ENCODE measurements at regions of chr2 and their contacts with region 1.

Region 1: GRCh38 chr2:96265840-96266679 is at the starts of genes CIAO1 and TMEM127:
- DNase-seq: peak; percentile 99
- H3K4me3 Mint-ChIP-seq: peak within 1 kb of the TSS; percentile 96
- H3K27ac Mint-ChIP-seq: peak within 1 kb of the TSS; percentile 94
- H3K4me1 Mint-ChIP-seq: peaks cover 33% of the 10 kb centered on the region
- H3K27me3 Mint-ChIP-seq: no peaks in the 10 kb centered on the region
- total RNA-seq, gene CIAO1: 111 and 115 TPM in 2 replicates
- total RNA-seq, gene TMEM127: 29.7 and 30.1 TPM in 2 replicates

Region 2: GRCh38 chr2:96116879-96117697 is 149.0 kb before region 1 on chr2:
- intact Hi-C with region 1: loop called (anchors 5 kb)
- DNase-seq: peak; percentile 61
- H3K4me3 Mint-ChIP-seq: peak overlapping the region; percentile 75
- H3K27ac Mint-ChIP-seq: no peak overlapping the region
- H3K4me1 Mint-ChIP-seq: peaks cover 28% of the 10 kb centered on the region
- H3K27me3 Mint-ChIP-seq: peaks cover 37% of the 10 kb centered on the region

Region 3: GRCh38 chr2:96241900-96242611 is 24.0 kb before region 1 on chr2:
- intact Hi-C with region 1: loop called (anchors 1 kb)
- DNase-seq: peak; percentile 62
- H3K4me3 Mint-ChIP-seq: peak overlapping the region; percentile 63
- H3K27ac Mint-ChIP-seq: peak overlapping the region; percentile 87
- H3K4me1 Mint-ChIP-seq: peaks cover 52% of the 10 kb centered on the region
- H3K27me3 Mint-ChIP-seq: no peaks in the 10 kb centered on the region

Region 4: GRCh38 chr2:96336104-96336775 is 70.2 kb after region 1 on chr2:
- intact Hi-C with region 1: loop called (anchors 2 kb)
- DNase-seq: no peak
- H3K4me3 Mint-ChIP-seq: peak overlapping the region; percentile 95
- H3K27ac Mint-ChIP-seq: peak overlapping the region; percentile 93
- H3K4me1 Mint-ChIP-seq: peaks cover 67% of the 10 kb centered on the region
- H3K27me3 Mint-ChIP-seq: no peaks in the 10 kb centered on the region

Region 5: GRCh38 chr2:96739633-96740428 is 473.8 kb after region 1 on chr2 and contains the start of gene LMAN2L:
- intact Hi-C with region 1: loop called (anchors 5 kb)
- DNase-seq: peak; percentile 94
- H3K4me3 Mint-ChIP-seq: peak within 1 kb of the TSS; percentile 90
- H3K27ac Mint-ChIP-seq: peak within 1 kb of the TSS; percentile 77
- H3K4me1 Mint-ChIP-seq: peaks cover 32% of the 10 kb centered on the region
- H3K27me3 Mint-ChIP-seq: no peaks in the 10 kb centered on the region
- total RNA-seq, gene LMAN2L: 5.6 and 6.0 TPM in 2 replicates

Measured in activated T-helper 1 cell treated with anti-CD3 and anti-CD28 coated beads, Interleukin-12 subunit alpha, Interleukin-12 subunit beta, Interleukin-2, Interleukin-4 antibody, amounts not matched to agents 30 ng/mL and 10 ng/mL and 1 ng/mL, durations not matched to agents 14 hours and 24 hours and 36 hours (primary cell).